ENCODE measurements at regions of chr7 and their contacts with region 1.

Region 1: GRCh38 chr7:41696314-41696916 is 6.5 kb downstream of the INHBA start:
- DNase-seq: peak; percentile 89
- H3K4me3 Mint-ChIP-seq: peak overlapping the region; percentile 76
- H3K27ac Mint-ChIP-seq: peak overlapping the region; percentile 59
- H3K4me1 Mint-ChIP-seq: peaks cover 59% of the 10 kb centered on the region
- H3K27me3 Mint-ChIP-seq: no peaks in the 10 kb centered on the region
- CTCF ChIP-seq: peak; percentile 69

Region 2: DNA sequence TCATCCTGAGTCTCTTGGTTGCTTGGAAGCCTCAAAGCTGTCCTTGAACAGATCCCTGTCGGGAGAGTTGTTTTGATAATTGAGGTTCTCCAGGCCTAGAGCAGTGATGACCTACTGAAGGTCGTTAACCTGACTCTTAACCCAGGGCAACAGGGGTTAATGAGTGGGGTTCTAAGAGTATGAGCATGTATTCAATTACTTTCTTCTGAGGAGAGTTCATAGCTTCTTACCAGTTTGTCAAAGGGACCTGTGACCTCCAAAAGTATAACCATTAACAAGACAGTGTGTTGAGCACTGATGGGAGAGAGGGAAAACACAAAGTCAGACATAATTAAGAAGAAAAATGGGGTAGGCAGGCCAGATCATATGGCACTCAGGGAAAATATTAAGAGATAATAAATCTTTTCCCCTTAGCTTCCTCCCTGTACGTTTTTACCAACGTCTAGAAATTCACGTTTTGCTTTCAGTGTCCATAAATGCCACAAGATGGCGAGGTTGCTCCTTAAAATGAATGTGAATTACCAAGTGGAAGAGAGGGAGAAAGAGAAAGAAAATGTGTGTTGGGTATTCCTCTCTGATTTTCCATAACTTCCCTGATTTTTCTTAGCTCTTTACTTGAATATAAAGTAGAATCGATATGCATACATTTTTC is 1464.0 kb before region 1 on chr7:
- CTCF ChIA-PET with region 1: interaction called, 14 read pairs
- POLR2A ChIA-PET with region 1: no interaction called
- intact Hi-C with region 1: no loop called
- DNase-seq: peak; percentile 69
- H3K4me3 Mint-ChIP-seq: no peak overlapping the region
- H3K27ac Mint-ChIP-seq: peak overlapping the region; percentile 50
- H3K4me1 Mint-ChIP-seq: peaks cover 10% of the 10 kb centered on the region
- H3K27me3 Mint-ChIP-seq: no peaks in the 10 kb centered on the region
- CTCF ChIP-seq: peak; percentile 65

Region 3: GRCh38 chr7:41003031-41003925 is 693.1 kb before region 1 on chr7:
- CTCF ChIA-PET with region 1: interaction called, 22 read pairs
- POLR2A ChIA-PET with region 1: interaction called, 6 read pairs
- intact Hi-C with region 1: loop called (anchors 2 kb)
- DNase-seq: peak; percentile 64
- H3K4me3 Mint-ChIP-seq: no peak overlapping the region
- H3K27ac Mint-ChIP-seq: peak overlapping the region; percentile 25
- H3K4me1 Mint-ChIP-seq: peaks cover 42% of the 10 kb centered on the region
- H3K27me3 Mint-ChIP-seq: no peaks in the 10 kb centered on the region
- CTCF ChIP-seq: peak; percentile 73

Region 4: DNA sequence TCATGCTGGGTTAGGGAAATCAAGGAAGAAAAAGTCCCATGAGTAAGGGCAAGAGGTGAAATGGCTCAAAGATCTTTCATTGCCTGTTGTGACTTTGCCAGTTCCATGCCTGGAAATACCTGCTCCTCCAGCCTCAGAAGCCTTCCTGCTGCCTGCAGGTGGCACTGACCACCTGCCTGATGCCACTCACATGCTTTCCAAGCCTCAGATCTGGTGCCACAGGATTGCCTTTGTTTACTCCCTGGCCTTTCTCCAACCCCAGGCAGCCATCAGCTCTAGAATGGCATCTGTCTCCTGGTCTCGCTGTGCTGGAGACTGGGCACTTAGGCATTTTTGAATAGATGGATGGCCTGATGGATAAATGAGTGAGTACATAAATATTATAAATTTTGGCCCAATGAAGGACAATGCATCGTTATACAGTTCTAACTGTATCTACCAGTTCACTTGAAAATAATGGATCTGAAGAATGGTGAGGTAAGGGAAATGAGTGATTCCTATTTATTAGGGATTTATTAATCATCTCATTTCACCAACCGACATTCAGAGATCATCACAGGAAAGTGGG is 650.8 kb before region 1 on chr7:
- CTCF ChIA-PET with region 1: interaction called, 30 read pairs
- POLR2A ChIA-PET with region 1: no interaction called
- intact Hi-C with region 1: loop called (anchors 1 kb)
- DNase-seq: peak; percentile 74
- H3K4me3 Mint-ChIP-seq: no peak overlapping the region
- H3K27ac Mint-ChIP-seq: no peak overlapping the region
- H3K4me1 Mint-ChIP-seq: peaks cover 21% of the 10 kb centered on the region
- H3K27me3 Mint-ChIP-seq: no peaks in the 10 kb centered on the region
- CTCF ChIP-seq: peak; percentile 38

Region 5: GRCh38 chr7:41148521-41148951 is 547.9 kb before region 1 on chr7:
- CTCF ChIA-PET with region 1: interaction called, 5 read pairs
- POLR2A ChIA-PET with region 1: interaction called, 5 read pairs
- intact Hi-C with region 1: loop called (anchors 2 kb)
- DNase-seq: peak; percentile 94
- H3K4me3 Mint-ChIP-seq: no peak overlapping the region
- H3K27ac Mint-ChIP-seq: peak overlapping the region; percentile 99
- H3K4me1 Mint-ChIP-seq: peaks cover 35% of the 10 kb centered on the region
- H3K27me3 Mint-ChIP-seq: no peaks in the 10 kb centered on the region
- CTCF ChIP-seq: no peak

Region 6: GRCh38 chr7:41584746-41585145 is 111.7 kb before region 1 on chr7:
- CTCF ChIA-PET with region 1: no interaction called
- POLR2A ChIA-PET with region 1: no interaction called
- intact Hi-C with region 1: no loop called
- DNase-seq: peak; percentile 44
- H3K4me3 Mint-ChIP-seq: no peak overlapping the region
- H3K27ac Mint-ChIP-seq: no peak overlapping the region
- H3K4me1 Mint-ChIP-seq: no peaks in the 10 kb centered on the region
- H3K27me3 Mint-ChIP-seq: no peaks in the 10 kb centered on the region
- CTCF ChIP-seq: no peak